Activated T-helper 1 cell treated with anti-CD3 and anti-CD28 coated beads, Interleukin-12 subunit alpha, Interleukin-12 subunit beta, Interleukin-2, Interleukin-4 antibody, amounts not matched to agents 30 ng/mL and 10 ng/mL and 1 ng/mL, durations not matched to agents 14 hours and 24 hours and 36 hours (primary cell): ENCODE measurements at regions of chr3 and their contacts with region 1.

Region 1: GRCh38 chr3:87461036-87461435 is 184.7 kb upstream of the POU1F1 start:
- DNase-seq: no peak
- H3K4me3 Mint-ChIP-seq: no peak overlapping the region
- H3K27ac Mint-ChIP-seq: no peak overlapping the region
- H3K4me1 Mint-ChIP-seq: no peaks in the 10 kb centered on the region
- H3K27me3 Mint-ChIP-seq: no peaks in the 10 kb centered on the region

Region 2: DNA sequence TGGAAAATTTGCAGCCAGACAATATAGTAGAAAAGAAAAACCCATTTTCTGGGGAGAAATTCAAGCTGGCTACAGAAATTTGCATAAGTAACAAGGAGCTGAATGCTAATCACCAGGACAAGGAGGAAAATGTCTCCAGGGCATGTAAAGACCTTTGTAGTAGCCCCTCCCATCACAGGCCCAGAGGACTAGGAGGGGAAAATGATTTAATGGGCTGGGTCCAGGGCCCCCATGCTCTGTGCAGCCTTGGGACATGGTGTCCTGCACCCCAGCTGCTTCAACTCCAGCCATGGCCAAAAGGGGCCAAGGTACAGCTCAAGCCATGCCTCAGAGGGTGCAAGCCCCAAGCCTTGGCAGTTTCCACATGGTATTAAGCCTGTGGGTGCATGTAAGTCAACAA is 12.9 kb after region 1 on chr3:
- intact Hi-C with region 1: loop called (anchors 2 kb)
- DNase-seq: no peak
- H3K4me3 Mint-ChIP-seq: no peak overlapping the region
- H3K27ac Mint-ChIP-seq: no peak overlapping the region
- H3K4me1 Mint-ChIP-seq: no peaks in the 10 kb centered on the region
- H3K27me3 Mint-ChIP-seq: no peaks in the 10 kb centered on the region